Activated CD4-positive, alpha-beta memory T cell treated with anti-CD3 and anti-CD28 coated beads for 36 hours (primary cell): ENCODE measurements at regions of chr14 and their contacts with region 1.

Region 1: DNA sequence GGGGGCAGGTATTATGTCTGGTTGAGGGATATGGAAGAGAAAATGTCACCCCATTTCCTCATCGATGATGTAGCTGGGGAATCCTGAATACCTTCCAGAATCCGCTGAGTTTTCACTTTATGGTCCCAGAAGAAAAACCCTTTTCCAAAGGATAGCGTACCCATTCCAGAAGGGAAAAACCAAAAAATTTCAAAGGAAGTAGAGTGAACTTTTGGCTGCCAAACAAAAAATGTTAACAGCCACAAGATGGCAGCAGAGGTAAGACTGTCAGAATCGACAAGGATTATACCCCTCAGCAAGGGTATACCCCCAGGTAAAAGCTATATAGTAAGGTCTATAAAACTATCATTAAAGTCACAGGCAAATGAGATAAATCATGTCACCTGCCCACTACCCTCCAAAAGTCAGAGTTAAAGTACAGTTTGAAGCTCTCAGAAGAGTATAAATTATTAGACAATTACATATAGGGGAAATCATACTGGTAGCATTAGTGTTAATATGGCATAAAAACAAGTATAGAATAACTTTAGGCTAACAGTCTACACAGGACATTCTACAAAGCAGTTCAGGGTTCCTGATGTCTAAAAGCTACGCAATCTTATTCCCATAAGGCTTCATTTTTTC is 18.0 kb downstream of the ACIN1 start:
- DNase-seq: no peak
- H3K4me3 Mint-ChIP-seq: no peak overlapping the region
- H3K27ac Mint-ChIP-seq: no peak overlapping the region
- H3K4me1 Mint-ChIP-seq: peaks cover 7% of the 10 kb centered on the region
- H3K27me3 Mint-ChIP-seq: no peaks in the 10 kb centered on the region

Region 2: GRCh38 chr14:22994762-22995275 is 82.1 kb before region 1 on chr14:
- CTCF ChIA-PET with region 1: interaction called, 10 read pairs
- POLR2A ChIA-PET with region 1: no interaction called
- intact Hi-C with region 1: no loop called
- DNase-seq: peak; percentile 40
- H3K4me3 Mint-ChIP-seq: no peak overlapping the region
- H3K27ac Mint-ChIP-seq: no peak overlapping the region
- H3K4me1 Mint-ChIP-seq: peaks cover 3% of the 10 kb centered on the region
- H3K27me3 Mint-ChIP-seq: no peaks in the 10 kb centered on the region

Region 3: GRCh38 chr14:23006544-23007419 is 70.1 kb before region 1 on chr14:
- CTCF ChIA-PET with region 1: interaction called, 12 read pairs
- POLR2A ChIA-PET with region 1: interaction called, 4 read pairs
- intact Hi-C with region 1: no loop called
- DNase-seq: peak; percentile 99
- H3K4me3 Mint-ChIP-seq: peak overlapping the region; percentile 94
- H3K27ac Mint-ChIP-seq: peak overlapping the region; percentile 96
- H3K4me1 Mint-ChIP-seq: peaks cover 33% of the 10 kb centered on the region
- H3K27me3 Mint-ChIP-seq: no peaks in the 10 kb centered on the region

Region 4: DNA sequence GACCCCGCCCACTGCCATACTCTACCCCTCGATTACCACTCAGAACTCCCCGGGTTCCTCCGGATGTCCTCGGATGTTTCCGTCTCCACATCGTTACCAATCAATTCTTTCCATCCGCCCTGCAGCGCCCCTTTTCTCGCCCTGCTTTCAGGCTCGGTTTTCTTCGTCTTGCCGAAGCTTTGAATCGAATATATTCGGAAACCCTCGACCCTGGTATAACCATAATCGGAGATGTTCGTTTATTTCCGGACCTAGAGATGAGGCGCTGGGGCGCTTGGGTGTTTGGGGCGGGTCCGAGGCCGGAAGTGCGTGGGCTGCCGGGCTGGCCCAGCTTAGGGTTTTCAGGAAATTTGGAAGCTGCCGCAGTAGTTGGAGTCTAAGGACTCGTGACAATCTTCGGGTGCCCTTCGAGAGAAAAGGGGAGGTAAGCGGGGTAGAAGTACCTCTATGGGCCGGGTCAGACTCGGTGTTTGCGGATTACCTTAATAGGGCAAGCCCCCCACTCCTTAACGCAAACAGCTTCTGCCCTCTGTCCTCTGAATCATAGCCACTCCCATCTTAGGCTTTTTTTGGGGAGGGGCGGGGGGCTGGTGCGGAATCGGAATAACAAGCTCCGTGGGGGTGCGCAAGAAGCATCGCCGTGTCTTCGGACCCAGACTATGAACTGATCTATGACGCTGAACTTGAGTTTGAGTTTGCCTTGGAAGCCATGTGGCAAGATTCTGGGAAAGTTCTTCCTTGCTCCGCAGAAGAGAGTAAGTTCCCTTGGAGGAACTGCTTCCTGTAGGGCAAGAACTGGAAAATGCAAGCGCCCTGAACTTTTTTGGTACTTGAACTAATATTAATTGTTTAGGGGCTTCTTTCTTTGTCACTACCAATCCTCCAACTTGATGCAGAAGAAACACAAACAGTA is 18.6 kb after region 1 on chr14 and contains the start of gene C14orf119:
- CTCF ChIA-PET with region 1: interaction called, 67 read pairs
- POLR2A ChIA-PET with region 1: interaction called, 17 read pairs
- intact Hi-C with region 1: no loop called
- DNase-seq: peak; percentile 100
- H3K4me3 Mint-ChIP-seq: no peak within 1 kb of the TSS
- H3K27ac Mint-ChIP-seq: no peak within 1 kb of the TSS
- H3K4me1 Mint-ChIP-seq: peaks cover 40% of the 10 kb centered on the region
- H3K27me3 Mint-ChIP-seq: no peaks in the 10 kb centered on the region
- total RNA-seq, gene C14orf119: 58.0 to 62.8 TPM

Region 5: DNA sequence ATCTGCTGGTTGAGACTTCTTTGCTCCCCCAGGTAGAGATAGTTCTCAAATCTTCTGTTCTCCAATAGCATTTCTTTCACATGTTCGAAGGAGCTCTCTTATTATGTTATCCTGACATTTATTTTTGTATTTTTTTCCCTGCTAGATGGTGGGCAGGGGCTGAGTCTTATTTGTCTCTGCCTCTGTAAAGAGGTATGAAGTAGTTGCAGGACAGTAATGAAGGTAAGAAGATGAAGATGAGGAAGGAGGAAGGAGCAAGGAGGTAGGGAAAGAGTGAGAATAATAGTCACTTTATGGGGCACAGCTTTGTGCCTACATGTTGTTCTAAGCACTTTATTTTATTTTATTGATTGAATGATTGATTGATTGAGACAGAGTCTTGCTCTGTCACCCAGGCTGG is 32.9 kb after region 1 on chr14:
- CTCF ChIA-PET with region 1: interaction called, 33 read pairs
- POLR2A ChIA-PET with region 1: no interaction called
- intact Hi-C with region 1: loop called (anchors 1 kb)
- DNase-seq: no peak
- H3K4me3 Mint-ChIP-seq: no peak overlapping the region
- H3K27ac Mint-ChIP-seq: no peak overlapping the region
- H3K4me1 Mint-ChIP-seq: peaks cover 4% of the 10 kb centered on the region
- H3K27me3 Mint-ChIP-seq: no peaks in the 10 kb centered on the region

Region 6: DNA sequence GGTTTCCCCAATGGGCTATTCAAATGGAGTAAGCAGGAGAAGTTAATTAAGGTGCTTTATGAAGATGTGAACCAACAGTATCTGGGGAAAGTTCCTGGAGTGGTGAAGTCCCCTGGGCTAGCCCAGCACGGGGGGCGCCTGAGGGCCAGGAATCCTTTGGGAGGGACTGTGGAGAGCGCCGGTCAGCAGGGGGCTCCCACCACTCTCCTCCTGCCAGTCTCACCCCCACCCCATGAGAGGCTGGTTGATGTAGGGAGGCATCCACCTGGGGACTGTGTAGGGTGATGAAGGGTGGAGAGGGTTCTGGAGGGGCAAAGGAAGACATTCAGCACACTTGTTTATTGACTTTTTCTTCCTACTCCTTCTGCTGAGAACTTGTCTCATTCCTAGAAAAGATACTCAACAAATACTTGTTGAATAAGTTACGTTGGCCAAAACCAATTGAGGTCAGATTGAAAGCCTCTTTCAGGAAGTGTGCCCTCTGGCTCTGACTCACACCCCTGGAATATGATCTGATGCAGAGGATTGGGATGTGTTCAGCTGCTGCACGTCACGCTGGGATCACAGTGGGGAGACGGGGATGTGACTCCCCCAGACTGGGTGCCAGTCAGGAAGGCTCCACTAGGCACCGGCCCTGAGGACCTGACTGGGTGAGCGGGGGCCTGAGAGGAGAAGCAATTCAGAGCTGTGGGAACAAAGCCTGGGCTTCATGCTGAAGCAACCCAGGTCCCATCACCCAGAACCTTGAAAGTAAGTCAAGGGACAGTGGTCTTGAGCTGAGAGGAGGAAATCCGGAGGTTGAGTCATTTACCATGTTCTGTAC is 38.0 kb after region 1 on chr14:
- CTCF ChIA-PET with region 1: interaction called, 62 read pairs
- POLR2A ChIA-PET with region 1: no interaction called
- intact Hi-C with region 1: no loop called
- DNase-seq: no peak
- H3K4me3 Mint-ChIP-seq: no peak overlapping the region
- H3K27ac Mint-ChIP-seq: no peak overlapping the region
- H3K4me1 Mint-ChIP-seq: peaks cover 24% of the 10 kb centered on the region
- H3K27me3 Mint-ChIP-seq: peaks cover 2% of the 10 kb centered on the region

Region 7: DNA sequence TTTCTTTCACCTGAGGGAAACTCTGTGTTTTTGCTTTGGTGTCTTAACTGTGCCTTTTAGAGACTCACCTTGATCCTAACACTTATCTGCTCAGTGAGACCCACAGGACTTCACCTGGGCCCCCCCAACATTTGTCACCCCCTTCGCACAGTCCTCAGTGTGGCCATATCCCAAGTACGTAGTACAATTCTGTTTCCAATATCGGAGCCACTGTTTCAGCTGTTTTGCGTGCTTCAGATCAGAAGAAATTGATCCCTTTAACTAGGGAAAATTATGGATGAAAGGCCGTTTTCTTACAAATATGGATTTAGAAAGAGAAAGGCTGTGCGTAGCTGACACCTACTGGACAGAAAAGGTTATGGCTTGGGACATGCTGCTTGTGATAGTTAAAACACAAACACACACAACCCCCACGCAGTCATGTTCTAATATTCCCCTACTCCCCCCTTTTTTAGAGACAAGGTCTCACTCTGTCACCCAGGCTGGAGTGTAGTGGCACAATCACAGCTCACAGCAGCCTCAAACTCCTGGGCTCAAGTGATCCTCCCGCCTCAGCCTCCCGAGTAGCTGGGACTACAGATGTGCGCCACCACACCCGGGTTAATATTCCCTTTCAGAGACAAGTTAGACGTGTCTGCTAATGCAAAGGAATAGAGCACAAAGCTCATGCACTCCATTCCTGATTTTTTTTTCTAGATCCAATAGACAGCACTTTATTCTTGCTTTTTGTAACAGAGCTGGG is 110.2 kb after region 1 on chr14:
- CTCF ChIA-PET with region 1: interaction called, 14 read pairs
- POLR2A ChIA-PET with region 1: no interaction called
- intact Hi-C with region 1: no loop called
- DNase-seq: peak; percentile 34
- H3K4me3 Mint-ChIP-seq: no peak overlapping the region
- H3K27ac Mint-ChIP-seq: no peak overlapping the region
- H3K4me1 Mint-ChIP-seq: no peaks in the 10 kb centered on the region
- H3K27me3 Mint-ChIP-seq: no peaks in the 10 kb centered on the region